Activated CD4-positive, alpha-beta T cell treated with anti-CD3 and anti-CD28 coated beads for 36 hours (primary cell): ENCODE measurements at regions of chr12 and their contacts with region 1.

Region 1: DNA sequence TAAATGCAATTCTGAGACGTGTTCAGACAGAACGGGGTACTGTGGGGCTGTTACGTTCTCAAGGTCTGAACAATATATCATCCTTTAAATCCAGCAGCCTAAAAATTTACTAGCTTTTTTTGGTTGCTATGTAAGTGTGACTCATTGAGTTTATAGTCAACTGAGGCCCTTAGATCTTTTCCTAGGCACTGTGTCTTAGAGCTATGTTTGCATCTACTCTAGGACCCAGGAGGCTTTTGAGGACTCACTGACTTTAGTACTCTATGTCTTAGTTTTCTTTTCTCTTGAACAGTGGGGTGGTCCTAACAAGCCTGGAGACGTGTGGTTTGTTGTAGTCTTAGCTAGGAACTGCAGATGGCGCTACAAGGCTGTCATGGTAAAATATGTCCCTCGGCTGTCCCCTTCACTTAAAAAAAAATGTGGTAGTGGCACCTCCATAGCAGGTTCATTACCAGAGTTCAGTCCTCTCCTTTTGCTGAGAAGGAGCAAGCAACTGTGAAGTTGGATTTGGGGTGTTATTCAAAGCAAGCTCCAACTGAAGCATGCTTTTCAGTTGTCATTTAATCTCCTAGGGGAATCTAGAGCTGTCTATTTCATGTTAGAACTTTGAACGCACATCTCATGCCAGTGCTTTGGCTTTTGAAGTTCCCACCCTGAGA is 8.7 kb upstream of the SPATS2 start:
- DNase-seq: peak; percentile 71
- ATAC-seq: peak; percentile 98
- H3K4me3 Mint-ChIP-seq: no peak overlapping the region
- H3K27ac Mint-ChIP-seq: no peak overlapping the region
- H3K4me1 Mint-ChIP-seq: peaks cover 6% of the 10 kb centered on the region
- H3K27me3 Mint-ChIP-seq: peaks cover 24% of the 10 kb centered on the region

Region 2: DNA sequence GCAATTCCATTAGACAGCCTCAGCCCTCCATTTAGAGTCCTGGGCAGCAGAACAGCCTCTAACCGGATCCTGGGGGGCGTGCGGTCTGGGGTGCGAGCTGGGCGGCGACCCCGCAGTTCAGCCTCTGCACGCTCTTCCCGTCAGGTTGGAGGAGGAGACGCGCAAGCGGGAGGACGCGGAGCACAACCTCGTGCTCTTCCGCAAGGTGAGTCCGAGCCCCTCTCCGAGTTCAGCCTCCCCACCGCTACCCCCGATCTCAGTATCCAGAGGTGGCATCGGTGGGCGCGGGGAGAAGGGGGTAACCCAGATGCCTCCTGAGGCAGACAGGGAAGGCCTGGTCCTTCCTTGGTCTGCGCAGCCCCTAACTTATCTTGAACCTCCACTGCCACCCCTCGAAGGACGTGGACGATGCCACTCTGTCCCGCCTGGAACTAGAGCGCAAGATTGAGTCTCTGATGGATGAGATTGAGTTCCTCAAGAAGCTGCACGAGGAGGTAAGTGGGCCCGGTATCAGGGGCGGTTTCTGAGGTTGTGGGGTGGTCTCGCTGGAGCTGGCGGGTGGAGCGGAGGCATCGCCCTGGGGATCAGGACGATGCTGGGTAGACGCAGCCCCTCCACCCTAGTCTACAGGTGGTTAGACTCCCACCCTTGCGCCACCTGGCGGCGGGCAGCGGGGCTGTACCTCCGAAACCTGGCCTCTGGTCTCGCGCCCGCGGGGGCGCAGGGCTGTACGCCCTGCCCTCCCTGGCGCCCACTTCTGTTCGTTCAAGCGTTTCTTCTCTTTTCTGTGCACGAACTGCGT is 62.4 kb before region 1 on chr12:
- CTCF ChIA-PET with region 1: interaction called, 168 read pairs
- POLR2A ChIA-PET with region 1: no interaction called
- intact Hi-C with region 1: no loop called
- DNase-seq: peak; percentile 82
- ATAC-seq: peak; percentile 80
- H3K4me3 Mint-ChIP-seq: peak overlapping the region; percentile 53
- H3K27ac Mint-ChIP-seq: no peak overlapping the region
- H3K4me1 Mint-ChIP-seq: peaks cover 12% of the 10 kb centered on the region
- H3K27me3 Mint-ChIP-seq: peaks cover 46% of the 10 kb centered on the region

Region 3: GRCh38 chr12:49342066-49342913 is 16.3 kb before region 1 on chr12:
- CTCF ChIA-PET with region 1: interaction called, 54 read pairs
- POLR2A ChIA-PET with region 1: no interaction called
- intact Hi-C with region 1: no loop called
- DNase-seq: peak; percentile 92
- ATAC-seq: peak; percentile 81
- H3K4me3 Mint-ChIP-seq: peak overlapping the region; percentile 47
- H3K27ac Mint-ChIP-seq: no peak overlapping the region
- H3K4me1 Mint-ChIP-seq: peaks cover 47% of the 10 kb centered on the region
- H3K27me3 Mint-ChIP-seq: peaks cover 71% of the 10 kb centered on the region

Region 4: DNA sequence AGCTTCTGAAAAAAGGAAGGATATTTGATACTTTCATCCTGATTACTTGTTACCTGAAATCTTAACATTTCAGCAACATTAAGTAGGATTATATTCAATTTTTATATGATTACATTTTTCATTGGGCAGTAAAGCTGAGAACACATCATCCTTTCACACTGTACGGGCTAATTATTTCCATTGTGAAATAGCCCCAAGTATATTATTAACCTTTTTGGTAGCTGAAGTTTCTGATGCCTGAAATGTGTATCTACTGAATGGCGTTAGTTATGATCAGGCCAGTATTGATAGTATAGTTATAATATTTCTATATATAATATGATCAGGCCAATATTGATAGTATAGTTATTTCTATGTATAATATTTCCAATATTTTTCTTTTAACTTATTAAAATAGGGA is 18.8 kb after region 1 on chr12:
- CTCF ChIA-PET with region 1: interaction called, 18 read pairs
- POLR2A ChIA-PET with region 1: no interaction called
- intact Hi-C with region 1: no loop called
- DNase-seq: no peak
- ATAC-seq: no peak
- H3K4me3 Mint-ChIP-seq: no peak overlapping the region
- H3K27ac Mint-ChIP-seq: no peak overlapping the region
- H3K4me1 Mint-ChIP-seq: peaks cover 4% of the 10 kb centered on the region
- H3K27me3 Mint-ChIP-seq: no peaks in the 10 kb centered on the region

Region 5: DNA sequence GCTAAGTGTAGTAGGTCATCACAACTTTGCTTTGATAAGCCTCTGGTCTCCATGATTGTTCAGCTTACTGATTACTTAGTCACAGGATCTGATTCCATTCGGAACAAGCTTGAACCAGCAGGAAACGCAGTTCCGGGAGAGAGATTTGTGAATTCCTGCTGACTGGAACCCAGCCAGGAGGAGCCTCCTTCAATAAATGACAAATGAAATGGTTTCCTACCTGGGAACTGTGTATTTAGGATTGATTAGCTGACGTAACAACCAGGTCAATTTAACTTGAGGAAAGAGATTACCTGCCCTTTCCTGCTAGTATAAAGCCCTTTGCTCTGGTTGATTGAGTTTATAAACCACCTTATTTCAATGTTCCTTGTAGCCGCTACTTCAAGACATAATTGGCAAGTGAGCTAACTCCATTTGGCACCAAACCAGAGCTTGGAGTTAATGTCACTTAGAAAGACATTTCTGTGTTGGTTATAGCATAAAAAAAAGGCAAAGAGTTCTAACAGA is 145.1 kb after region 1 on chr12:
- CTCF ChIA-PET with region 1: interaction called, 43 read pairs
- POLR2A ChIA-PET with region 1: no interaction called
- intact Hi-C with region 1: no loop called
- DNase-seq: no peak
- ATAC-seq: no peak
- H3K4me3 Mint-ChIP-seq: no peak overlapping the region
- H3K27ac Mint-ChIP-seq: no peak overlapping the region
- H3K4me1 Mint-ChIP-seq: peaks cover 12% of the 10 kb centered on the region
- H3K27me3 Mint-ChIP-seq: no peaks in the 10 kb centered on the region

Region 6: GRCh38 chr12:49538510-49539403 is 180.1 kb after region 1 on chr12 and contains the start of gene KCNH3:
- CTCF ChIA-PET with region 1: interaction called, 11 read pairs
- POLR2A ChIA-PET with region 1: no interaction called
- intact Hi-C with region 1: no loop called
- DNase-seq: peak; percentile 90
- ATAC-seq: peak; percentile 82
- H3K4me3 Mint-ChIP-seq: peak within 1 kb of the TSS; percentile 55
- H3K27ac Mint-ChIP-seq: no peak within 1 kb of the TSS
- H3K4me1 Mint-ChIP-seq: peaks cover 4% of the 10 kb centered on the region
- H3K27me3 Mint-ChIP-seq: peaks cover 17% of the 10 kb centered on the region
- total RNA-seq, gene KCNH3: 2.4 to 3.3 TPM